ENCODE measurements at regions of chr3 and their contacts with region 1.

Region 1: DNA sequence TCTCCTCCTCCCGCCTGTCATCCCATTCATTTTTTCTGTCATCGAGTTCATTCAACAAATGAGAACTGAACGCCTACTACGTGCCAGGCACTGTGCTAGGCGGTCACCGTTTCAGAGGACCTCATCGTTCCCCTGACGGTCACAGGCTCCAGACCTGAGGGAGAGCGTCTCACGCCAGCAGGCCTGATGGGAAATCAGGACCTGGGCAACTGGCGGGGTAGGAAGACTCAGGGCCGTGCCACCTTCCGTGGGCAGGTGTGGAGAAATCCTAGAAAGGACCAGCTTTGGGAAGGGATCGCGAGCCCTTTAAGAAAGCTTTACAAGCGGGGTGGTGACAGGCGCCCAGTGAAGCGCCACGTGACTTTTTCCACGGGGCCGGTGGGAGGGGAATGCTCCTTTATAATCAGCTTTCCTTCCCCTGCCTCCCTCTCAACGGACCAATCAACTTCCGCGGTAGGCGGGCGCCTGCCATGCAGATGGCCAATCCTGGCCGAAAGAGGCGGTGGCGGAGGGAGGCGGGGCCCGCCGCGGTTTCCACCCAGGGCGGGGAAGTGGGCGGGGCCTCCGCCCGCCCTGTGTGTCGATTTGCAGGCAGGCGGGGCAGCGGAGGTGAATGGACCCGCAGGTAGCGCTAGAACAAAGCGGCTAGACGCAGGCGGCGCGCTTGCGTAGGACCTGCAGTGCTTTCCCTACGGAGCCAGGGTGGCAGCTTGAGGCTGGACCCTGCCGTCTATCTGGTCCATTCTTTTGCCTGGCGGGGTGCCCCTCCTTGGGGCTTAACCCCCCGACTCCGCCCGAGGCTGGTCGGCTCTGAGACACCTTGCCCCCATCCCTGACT is 816 bp upstream of the DUSP7 start:
- DNase-seq: peak; percentile 99
- H3K4me3 Mint-ChIP-seq: peak overlapping the region; percentile 91
- H3K27ac Mint-ChIP-seq: peak overlapping the region; percentile 94
- H3K4me1 Mint-ChIP-seq: peaks cover 31% of the 10 kb centered on the region
- H3K27me3 Mint-ChIP-seq: peaks cover 2% of the 10 kb centered on the region

Region 2: GRCh38 chr3:50358911-50359759 is 1698.1 kb before region 1 on chr3 and contains the start of gene TMEM115:
- intact Hi-C with region 1: loop called (anchors 10 kb)
- DNase-seq: peak; percentile 95
- H3K4me3 Mint-ChIP-seq: peak within 1 kb of the TSS; percentile 99
- H3K27ac Mint-ChIP-seq: peak within 1 kb of the TSS; percentile 96
- H3K4me1 Mint-ChIP-seq: peaks cover 43% of the 10 kb centered on the region
- H3K27me3 Mint-ChIP-seq: peaks cover 4% of the 10 kb centered on the region
- total RNA-seq, gene TMEM115: 23.6 and 25.4 TPM in 2 replicates

Region 3: GRCh38 chr3:51498876-51499738 is 558.1 kb before region 1 on chr3:
- intact Hi-C with region 1: loop called (anchors 1 kb)
- DNase-seq: peak; percentile 85
- H3K4me3 Mint-ChIP-seq: peak overlapping the region; percentile 88
- H3K27ac Mint-ChIP-seq: peak overlapping the region; percentile 95
- H3K4me1 Mint-ChIP-seq: peaks cover 21% of the 10 kb centered on the region
- H3K27me3 Mint-ChIP-seq: peaks cover 3% of the 10 kb centered on the region

Region 4: DNA sequence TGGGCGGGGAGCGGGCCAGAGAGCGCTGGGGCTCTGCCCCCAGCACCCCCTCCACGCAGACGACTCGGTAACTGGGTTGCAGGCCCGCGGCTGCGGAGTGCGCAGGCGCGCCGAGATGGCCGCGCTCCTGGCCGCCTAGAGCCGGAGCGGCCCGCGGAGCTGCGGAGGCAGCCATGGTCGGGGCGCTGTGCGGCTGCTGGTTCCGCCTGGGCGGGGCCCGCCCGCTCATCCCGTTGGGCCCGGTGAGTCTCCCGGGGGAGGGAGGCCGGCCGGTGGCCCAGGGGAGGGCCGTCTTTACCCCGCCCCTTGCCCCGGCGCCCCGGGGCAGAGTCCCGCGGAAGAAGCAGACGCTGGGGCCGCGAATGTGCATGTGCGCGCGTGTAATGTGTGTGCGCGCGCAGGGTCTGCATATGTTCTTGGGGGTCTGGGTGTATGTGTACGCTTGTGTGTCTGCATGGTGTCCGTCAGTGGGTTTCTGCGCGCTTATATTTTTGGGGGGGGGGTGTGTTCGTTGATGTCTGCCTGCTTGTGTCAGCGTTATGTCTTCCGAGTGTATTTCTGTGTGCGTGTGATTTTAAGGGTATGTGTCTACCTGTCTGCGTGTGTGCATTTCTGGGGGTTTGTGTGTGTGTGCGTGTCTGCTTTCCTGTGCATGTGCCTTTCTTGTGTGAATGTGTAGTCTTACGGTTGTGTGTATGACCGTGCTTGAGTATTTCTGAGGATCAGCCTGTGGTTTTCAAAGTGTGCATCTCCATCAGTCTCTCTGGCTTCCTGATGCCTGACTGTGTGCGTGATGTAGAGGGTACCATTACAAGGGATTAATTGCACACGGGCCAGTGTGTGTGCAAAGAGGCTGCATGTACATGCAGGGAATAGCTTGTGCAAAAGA is 82.0 kb before region 1 on chr3 and contains the start of gene ABHD14A:
- intact Hi-C with region 1: loop called (anchors 2 kb)
- DNase-seq: peak; percentile 72
- H3K4me3 Mint-ChIP-seq: peak within 1 kb of the TSS; percentile 87
- H3K27ac Mint-ChIP-seq: peak within 1 kb of the TSS; percentile 90
- H3K4me1 Mint-ChIP-seq: peaks cover 24% of the 10 kb centered on the region
- H3K27me3 Mint-ChIP-seq: no peaks in the 10 kb centered on the region
- total RNA-seq, gene ABHD14A: 12.8 and 13.3 TPM in 2 replicates

Region 5: DNA sequence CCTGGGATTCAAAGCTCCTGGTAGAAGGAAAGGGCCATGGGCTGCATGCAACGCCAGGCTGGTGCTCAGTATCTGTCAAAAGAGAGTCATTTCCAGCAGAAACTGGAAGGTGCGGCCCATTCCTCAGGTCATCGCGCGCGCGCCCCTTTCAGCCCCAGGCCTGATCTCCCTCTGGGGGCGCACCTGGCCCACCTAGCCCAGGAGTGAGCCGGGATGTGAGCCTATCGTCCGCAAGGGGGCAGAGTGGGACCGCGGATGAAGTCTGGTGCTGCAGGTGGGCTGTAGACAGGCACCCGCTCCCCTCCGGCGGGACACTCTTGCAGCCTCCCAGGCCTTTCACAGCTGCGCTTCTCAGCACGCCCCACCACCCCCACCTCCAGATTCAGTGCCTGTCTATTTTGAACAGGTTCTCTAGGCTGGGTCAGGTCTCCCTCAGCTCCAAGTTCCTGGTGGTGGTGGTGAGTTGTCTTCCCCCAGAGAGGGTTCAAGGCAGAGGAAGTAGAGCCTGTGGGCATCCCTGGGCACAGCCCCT is 55.7 kb before region 1 on chr3:
- intact Hi-C with region 1: loop called (anchors 1 kb)
- DNase-seq: peak; percentile 77
- H3K4me3 Mint-ChIP-seq: no peak overlapping the region
- H3K27ac Mint-ChIP-seq: no peak overlapping the region
- H3K4me1 Mint-ChIP-seq: peaks cover 7% of the 10 kb centered on the region
- H3K27me3 Mint-ChIP-seq: peaks cover 9% of the 10 kb centered on the region

Region 6: DNA sequence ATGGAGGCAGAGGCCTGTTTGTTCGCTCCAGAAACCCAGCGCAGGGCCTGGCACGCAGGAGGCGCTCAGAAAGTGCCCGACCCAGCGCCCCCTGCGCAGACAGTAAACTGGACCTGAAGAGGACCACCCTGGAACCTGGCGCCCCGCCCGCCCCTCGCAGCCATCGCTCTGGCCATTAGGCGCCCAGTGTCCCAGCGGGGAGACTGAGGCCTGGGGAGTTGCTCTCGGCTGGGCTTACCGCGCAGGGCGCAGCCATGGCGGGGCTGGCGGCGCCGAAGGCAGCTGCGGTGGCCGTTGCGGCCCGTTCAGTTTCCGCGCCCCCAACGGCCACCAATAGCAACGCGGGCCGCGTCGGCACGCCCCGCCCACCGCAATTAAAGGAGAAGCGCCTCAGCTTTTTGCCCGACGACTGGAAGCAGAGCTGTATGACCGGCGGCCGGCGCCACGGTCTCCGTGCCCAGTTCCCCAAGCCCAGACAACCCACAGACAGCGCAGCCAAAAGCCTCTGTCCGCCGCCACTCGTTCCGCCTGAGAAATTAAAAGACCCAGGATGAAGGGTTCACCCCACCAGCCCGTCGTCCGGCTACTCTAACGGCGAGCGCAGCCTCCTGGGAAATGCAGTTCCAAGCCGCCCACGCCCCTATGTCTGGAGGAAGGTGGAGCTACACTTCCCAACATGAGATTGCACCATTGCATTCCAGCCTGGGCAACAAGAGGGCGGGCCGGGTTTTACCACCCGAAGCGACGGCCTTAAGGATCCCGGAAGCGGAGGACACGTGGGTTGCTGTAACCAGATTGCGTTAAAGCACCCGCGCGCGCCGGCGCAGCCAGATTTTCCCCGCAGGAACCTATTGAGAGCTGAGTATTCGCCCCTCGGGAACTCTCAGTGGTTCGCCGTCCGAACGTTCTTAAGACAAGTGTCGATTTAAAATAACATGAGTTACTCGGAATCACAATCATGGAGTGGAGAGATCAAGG is 97.2 kb after region 1 on chr3 and contains the start of gene POC1A:
- intact Hi-C with region 1: loop called (anchors 1 kb)
- DNase-seq: peak; percentile 86
- H3K4me3 Mint-ChIP-seq: peak within 1 kb of the TSS; percentile 91
- H3K27ac Mint-ChIP-seq: peak within 1 kb of the TSS; percentile 95
- H3K4me1 Mint-ChIP-seq: peaks cover 25% of the 10 kb centered on the region
- H3K27me3 Mint-ChIP-seq: peaks cover 3% of the 10 kb centered on the region
- total RNA-seq, gene POC1A: 20.3 and 24.9 TPM in 2 replicates

Region 7: DNA sequence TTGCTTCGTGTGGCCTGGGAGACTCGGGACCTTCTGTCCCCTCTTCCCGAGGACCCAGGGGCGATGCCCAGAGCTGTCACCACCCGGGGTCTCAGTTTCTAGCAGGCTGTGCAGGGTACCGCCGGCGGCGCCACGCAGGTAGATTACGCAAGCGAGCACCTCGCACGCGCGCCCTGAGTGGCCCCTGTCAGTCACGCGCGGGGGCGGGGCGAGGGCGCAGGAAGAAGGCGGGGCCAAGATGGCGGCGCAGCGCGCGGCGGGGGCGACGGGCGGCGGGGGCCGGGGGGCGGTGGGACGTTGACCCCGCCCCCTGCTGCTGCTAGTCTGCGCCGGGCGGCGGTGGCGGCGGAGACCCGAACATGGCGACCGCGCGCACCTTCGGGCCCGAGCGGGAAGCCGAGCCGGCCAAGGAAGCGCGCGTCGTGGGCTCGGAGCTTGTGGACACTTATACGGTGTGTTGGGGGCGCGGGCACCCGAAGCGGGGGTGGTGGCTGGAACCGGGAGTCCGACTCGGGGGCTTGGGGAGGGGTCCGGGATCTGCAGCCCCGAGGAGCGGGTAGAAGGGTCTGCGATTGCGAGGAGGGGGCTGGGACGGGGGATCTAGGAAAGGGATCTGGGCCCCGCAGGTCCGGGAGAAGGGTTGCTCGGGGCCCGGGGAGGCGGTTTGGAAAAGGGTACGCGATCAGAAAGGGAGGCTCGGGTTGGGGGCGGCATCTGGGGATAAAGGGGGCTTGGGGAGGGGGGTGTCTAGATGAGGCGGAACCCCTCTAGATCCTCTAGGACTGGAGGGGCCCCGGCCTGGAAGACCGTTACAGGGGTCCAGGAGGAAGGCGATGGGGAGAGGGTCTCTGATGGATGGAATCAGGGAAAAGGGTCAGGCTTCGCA is 398.3 kb after region 1 on chr3 and contains the start of gene NISCH:
- intact Hi-C with region 1: loop called (anchors 10 kb)
- DNase-seq: peak; percentile 96
- H3K4me3 Mint-ChIP-seq: peak within 1 kb of the TSS; percentile 96
- H3K27ac Mint-ChIP-seq: peak within 1 kb of the TSS; percentile 93
- H3K4me1 Mint-ChIP-seq: peaks cover 39% of the 10 kb centered on the region
- H3K27me3 Mint-ChIP-seq: no peaks in the 10 kb centered on the region
- total RNA-seq, gene NISCH: 72.0 and 74.2 TPM in 2 replicates